Gastrocnemius medialis (tissue), 4 donors: ENCODE measurements at regions of chr2 and their contacts with region 1.

Region 1: DNA sequence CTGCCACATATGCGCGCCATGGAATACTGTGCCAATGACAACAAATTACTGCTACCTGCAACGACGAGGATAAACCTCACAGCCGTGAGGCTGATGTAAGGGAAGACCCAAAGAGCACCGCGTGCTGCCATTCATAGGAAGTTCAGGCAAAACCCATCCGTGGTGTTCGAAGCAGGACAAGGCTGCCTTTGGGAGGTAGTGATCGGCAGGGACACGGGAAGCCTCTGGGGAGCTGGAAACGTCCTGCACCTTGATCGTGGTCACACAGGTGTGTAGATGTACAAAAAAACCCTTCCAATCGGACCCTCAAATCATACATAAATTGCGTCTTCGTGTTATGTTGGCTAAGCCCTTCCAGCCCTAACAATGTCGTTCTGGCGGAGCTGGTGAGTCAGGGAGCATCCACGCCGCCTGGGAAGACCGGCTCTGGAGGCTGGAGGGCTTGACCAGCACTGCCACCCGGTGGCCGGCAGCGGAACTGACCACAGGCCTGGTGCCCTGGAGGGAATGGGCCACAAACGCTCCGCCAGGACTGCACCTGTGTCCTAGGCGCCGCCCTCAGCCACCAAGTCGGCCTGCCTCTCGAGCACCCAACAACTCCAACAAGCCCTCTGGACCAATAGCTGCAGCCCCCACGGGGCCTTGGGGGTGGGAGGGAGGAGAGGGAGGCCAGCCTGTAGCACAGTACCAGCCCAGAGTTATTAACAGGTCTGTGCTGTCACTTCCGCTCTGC is 4.1 kb upstream of the NEURL3 start:
- DNase-seq: peak; percentile 73 to 86
- ATAC-seq: peak; percentile 82 to 91
- H3K4me3 ChIP-seq: peak overlapping the region in 1 of 4 donors; percentile 16
- H3K27ac ChIP-seq: peak overlapping the region in 3 of 4 donors; percentile 23 to 56 (median 50)
- H3K4me1 ChIP-seq: peaks cover 31 to 32% of the 10 kb centered on the region in 2 donors
- H3K27me3 ChIP-seq: no peaks in the 10 kb centered on the region
- CTCF ChIP-seq: peak; percentile 95 to 100 (median 98)
- POLR2A ChIP-seq: no peak

Region 2: GRCh38 chr2:96024336-96025193 is 484.7 kb before region 1 on chr2:
- in situ Hi-C with region 1: loop called in 3 of 4 experiments (anchors 25 kb)
- intact Hi-C with region 1: loop called (anchors 10 kb)
- DNase-seq: no peak
- ATAC-seq: no peak
- H3K4me3 ChIP-seq: peak overlapping the region in 1 of 4 donors; percentile 28
- H3K27ac ChIP-seq: peak overlapping the region in 1 of 4 donors; percentile 28
- H3K4me1 ChIP-seq: peaks cover 0 to 1% of the 10 kb centered on the region in 2 donors
- H3K27me3 ChIP-seq: no peaks in the 10 kb centered on the region
- CTCF ChIP-seq: no peak
- POLR2A ChIP-seq: no peak

Region 3: DNA sequence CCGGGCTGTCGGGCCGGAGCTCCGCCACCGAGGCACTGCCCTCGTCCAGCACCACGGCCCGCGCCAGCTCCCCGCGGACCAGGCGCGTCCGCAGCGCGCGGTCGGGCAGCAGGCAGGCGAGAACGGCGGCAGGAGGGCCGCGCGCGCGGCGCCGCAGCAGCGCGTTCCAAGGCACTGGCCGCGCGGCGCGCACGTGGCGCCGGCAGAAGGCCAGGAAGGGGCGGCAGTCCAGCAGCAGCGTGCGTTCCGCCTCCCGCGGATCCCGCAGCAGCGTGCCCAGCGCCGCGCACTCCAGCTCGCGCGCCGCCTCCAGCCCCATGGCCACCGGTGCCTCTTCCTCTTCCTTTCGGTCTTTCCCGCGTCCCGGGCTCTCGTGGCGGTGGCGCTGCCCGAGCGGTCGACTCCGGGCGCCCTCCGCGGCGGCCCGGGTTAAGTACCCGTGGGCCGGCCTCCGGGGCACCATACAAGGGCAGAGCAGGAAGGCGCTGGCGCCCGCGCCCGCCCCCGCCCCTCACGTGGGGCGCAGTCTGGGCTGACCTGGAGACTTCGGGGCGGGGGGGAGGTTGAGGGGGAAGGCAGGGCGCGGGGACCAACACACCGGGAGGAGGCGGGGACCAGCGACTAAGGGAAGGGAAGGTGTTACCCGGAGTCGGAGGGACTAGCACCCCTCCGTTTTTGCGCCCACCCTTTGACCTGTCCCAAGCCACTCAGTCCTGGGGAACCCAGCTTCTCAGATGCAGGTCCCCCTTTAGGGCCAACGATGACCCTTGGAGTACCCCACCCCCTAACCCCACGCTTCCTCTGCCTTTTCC is 364.0 kb before region 1 on chr2 and contains the start of gene DUSP2:
- in situ Hi-C with region 1: loop called in 1 of 4 experiments (anchors 25 kb)
- intact Hi-C with region 1: no loop called
- DNase-seq: peak; percentile 54 to 75
- ATAC-seq: peak; percentile 73 to 86
- H3K4me3 ChIP-seq: peak within 1 kb of the TSS; percentile 48 to 71 (median 58)
- H3K27ac ChIP-seq: peak within 1 kb of the TSS; percentile 67 to 77 (median 70)
- H3K4me1 ChIP-seq: peaks cover 0 to 7% of the 10 kb centered on the region in 2 donors
- H3K27me3 ChIP-seq: no peaks in the 10 kb centered on the region
- CTCF ChIP-seq: peak in 1 of 5 experiments; percentile 11
- POLR2A ChIP-seq: peak; percentile 62 to 80
- total RNA-seq, gene DUSP2: 1.6 to 4.0 (median 2.9) TPM

Region 4: GRCh38 chr2:96407041-96407918 is 102.0 kb before region 1 on chr2:
- in situ Hi-C with region 1: loop called (anchors 5 kb)
- intact Hi-C with region 1: loop called (anchors 2 kb)
- DNase-seq: peak; percentile 43 to 55
- ATAC-seq: peak; percentile 71 to 76
- H3K4me3 ChIP-seq: no peak overlapping the region
- H3K27ac ChIP-seq: no peak overlapping the region
- H3K4me1 ChIP-seq: peaks cover 0 to 14% of the 10 kb centered on the region in 2 donors
- H3K27me3 ChIP-seq: no peaks in the 10 kb centered on the region
- CTCF ChIP-seq: peak; percentile 52 to 87 (median 83)
- POLR2A ChIP-seq: no peak

Region 5: GRCh38 chr2:96554293-96555145 is 45.2 kb after region 1 on chr2:
- in situ Hi-C with region 1: no loop called
- intact Hi-C with region 1: loop called (anchors 1 kb)
- DNase-seq: peak; percentile 56 to 84
- ATAC-seq: peak; percentile 70 to 72
- H3K4me3 ChIP-seq: peak overlapping the region; percentile 31 to 48 (median 40)
- H3K27ac ChIP-seq: peak overlapping the region; percentile 79 to 93 (median 84)
- H3K4me1 ChIP-seq: peaks cover 14 to 17% of the 10 kb centered on the region in 2 donors
- H3K27me3 ChIP-seq: no peaks in the 10 kb centered on the region
- CTCF ChIP-seq: peak; percentile 90 to 99 (median 97)
- POLR2A ChIP-seq: peak in 1 of 2 donors; percentile 52